ENCODE measurements at regions of chr11 and their contacts with region 1.

Region 1: DNA sequence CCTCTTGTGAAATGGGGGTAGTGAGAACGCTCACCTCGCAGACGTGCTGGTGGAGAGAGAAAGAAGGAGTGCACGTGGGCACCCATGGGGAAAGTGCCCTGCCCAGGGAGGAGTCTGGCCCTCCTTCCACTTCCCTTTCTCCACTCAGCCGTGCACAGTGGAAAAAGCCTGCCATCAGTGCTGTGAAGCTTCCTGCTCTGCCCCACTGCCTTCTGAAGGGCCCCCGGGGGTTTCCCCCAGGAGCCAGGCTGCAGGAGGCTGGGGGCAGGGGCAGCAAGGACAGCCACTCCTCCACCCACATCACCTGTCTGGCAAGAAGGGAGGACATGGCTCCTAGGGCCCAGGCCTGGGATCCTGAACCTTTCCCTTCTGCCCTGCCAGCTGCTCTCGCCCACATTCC is 7.6 kb downstream of the TP53I11 start:
- DNase-seq: no peak
- ATAC-seq: no peak
- H3K4me3 Mint-ChIP-seq: no peak overlapping the region
- H3K27ac Mint-ChIP-seq: 0 out of 2 replicates have a peak overlapping the region, but pooled peaks have one; percentile 71
- H3K4me1 Mint-ChIP-seq: peaks cover 50% of the 10 kb centered on the region
- H3K27me3 Mint-ChIP-seq: no peaks in the 10 kb centered on the region
- CTCF ChIP-seq: no peak

Region 2: DNA sequence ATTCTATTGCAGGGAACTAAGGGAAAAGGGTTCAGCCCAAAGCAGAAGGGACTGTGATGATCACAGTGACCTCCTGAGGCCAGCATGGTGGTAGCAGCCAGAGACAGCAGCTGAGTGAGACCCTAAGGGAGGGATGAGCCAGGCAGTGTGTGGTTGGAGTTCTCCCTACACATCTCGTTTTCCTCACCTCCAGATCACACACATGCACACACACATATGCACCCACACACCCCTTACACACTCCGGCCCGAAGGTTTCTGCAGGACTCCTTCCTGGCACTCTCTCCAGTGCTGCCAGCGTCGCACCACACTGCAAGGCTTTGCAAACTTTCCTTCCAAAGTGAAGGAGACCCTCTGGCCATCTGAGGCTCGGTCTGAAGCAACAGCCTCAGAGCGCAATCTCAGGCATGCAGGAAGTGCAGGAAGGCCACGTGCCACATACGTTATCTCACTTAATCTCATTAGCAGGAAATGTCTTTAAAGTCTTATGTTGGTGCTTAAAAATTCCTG is 34.4 kb after region 1 on chr11:
- CTCF ChIA-PET with region 1: interaction called, 61 read pairs
- POLR2A ChIA-PET with region 1: no interaction called
- DNase-seq: no peak
- ATAC-seq: peak; percentile 74
- H3K4me3 Mint-ChIP-seq: no peak overlapping the region
- H3K27ac Mint-ChIP-seq: peak overlapping the region; percentile 32; the same call in 1 of the 2 replicates
- H3K4me1 Mint-ChIP-seq: peaks cover 18% of the 10 kb centered on the region
- H3K27me3 Mint-ChIP-seq: no peaks in the 10 kb centered on the region
- CTCF ChIP-seq: no peak

Region 3: GRCh38 chr11:45097721-45098493 is 154.8 kb after region 1 on chr11:
- CTCF ChIA-PET with region 1: interaction called, 361 read pairs
- POLR2A ChIA-PET with region 1: interaction called, 3 read pairs
- DNase-seq: peak; percentile 88
- ATAC-seq: peak; percentile 46
- H3K4me3 Mint-ChIP-seq: no peak overlapping the region
- H3K27ac Mint-ChIP-seq: no peak overlapping the region
- H3K4me1 Mint-ChIP-seq: peaks cover 26% of the 10 kb centered on the region
- H3K27me3 Mint-ChIP-seq: peaks cover 5% of the 10 kb centered on the region; the same call in 1 of the 2 replicates
- CTCF ChIP-seq: no peak

Region 4: GRCh38 chr11:45161252-45162063 is 218.3 kb after region 1 on chr11:
- CTCF ChIA-PET with region 1: no interaction called
- POLR2A ChIA-PET with region 1: no interaction called
- DNase-seq: no peak
- ATAC-seq: no peak
- H3K4me3 Mint-ChIP-seq: no peak overlapping the region
- H3K27ac Mint-ChIP-seq: no peak overlapping the region
- H3K4me1 Mint-ChIP-seq: 0 out of 2 replicates have a peak, but pooled peaks cover 2% of the 10 kb centered on the region
- H3K27me3 Mint-ChIP-seq: no peaks in the 10 kb centered on the region
- CTCF ChIP-seq: no peak

Region 5: GRCh38 chr11:45304111-45304991 is 361.2 kb after region 1 on chr11:
- CTCF ChIA-PET with region 1: no interaction called
- POLR2A ChIA-PET with region 1: no interaction called
- DNase-seq: no peak
- ATAC-seq: no peak
- H3K4me3 Mint-ChIP-seq: no peak overlapping the region
- H3K27ac Mint-ChIP-seq: no peak overlapping the region
- H3K4me1 Mint-ChIP-seq: peaks cover 10% of the 10 kb centered on the region; the same call in 1 of the 2 replicates
- H3K27me3 Mint-ChIP-seq: peaks cover 83% of the 10 kb centered on the region
- CTCF ChIP-seq: no peak